ENCODE measurements at regions of chr11 and their contacts with region 1.

Region 1: DNA sequence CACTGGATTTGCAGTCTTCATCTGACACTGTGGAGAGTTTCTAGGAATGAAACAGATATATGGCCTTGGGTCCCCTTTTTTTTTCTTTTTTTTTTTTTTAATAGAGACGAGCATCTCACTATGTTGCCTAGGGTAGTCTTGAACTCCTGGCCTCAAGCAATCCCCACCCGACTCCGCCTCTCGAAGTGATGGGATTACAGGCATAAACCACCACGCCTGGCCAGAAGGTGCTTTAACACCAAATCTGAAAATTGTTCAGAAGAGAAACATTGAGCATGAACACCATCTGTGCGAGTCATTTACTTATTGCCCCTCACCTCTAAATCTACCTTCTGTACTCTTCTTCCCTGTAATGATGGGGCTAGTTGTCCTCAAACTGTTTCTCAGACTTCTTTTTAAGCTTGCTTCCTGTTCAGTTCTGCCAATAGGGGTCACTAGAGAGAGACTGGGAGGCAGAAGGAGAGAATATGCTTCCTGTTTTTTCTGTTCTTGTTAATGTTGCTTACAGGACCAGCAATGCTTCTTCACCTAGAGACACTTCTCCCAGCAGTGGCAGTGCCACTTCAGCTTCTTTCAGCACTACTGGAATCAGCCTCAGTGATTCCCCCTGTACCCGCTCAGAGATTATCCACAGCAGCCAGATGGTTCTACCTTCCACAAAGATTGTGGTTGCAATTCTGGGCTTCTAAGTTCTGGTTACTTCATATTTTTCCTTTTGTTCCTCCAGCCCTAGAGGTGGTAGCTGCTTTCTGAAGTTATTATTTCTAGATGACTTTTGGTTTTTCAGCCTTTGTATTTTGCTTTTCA is 20.8 kb upstream of the ZBED5 start:
- H3K4me3 ChIP-seq: no peak overlapping the region
- H3K27ac ChIP-seq: no peak overlapping the region
- H3K4me1 ChIP-seq: no peaks in the 10 kb centered on the region
- CTCF ChIP-seq: no peak

Region 2: DNA sequence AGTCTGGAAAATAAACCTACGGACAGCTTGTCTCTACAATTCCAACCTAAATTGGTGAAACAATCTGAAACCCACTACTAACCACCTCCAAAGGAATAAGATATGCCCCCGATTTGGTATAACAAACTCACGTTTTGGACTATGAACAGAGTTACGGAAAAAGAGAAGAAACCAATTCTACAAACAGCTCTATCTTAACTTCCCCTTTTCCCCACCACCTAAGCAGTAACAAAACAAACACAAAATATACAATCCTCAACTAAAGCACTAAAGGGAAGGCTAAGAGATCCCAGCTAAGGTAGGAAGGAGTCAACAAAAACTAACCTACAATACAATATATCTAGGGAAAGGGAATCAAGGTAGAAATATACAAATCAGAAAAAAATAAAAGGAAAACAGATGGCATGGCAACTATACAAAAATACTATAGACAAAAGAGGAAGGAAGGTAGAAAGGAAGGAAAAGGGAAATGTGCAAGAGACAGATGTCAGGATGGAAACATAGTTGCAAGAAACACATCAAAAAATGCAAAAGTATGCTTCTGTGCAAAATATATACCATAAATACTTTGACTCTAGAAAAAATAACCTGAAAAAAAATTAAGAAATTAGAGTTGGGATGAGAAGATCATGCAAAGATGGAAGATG is 266.3 kb before region 1 on chr11:
- CTCF ChIA-PET with region 1: no interaction called
- POLR2A ChIA-PET with region 1: no interaction called
- H3K4me3 ChIP-seq: no peak overlapping the region
- H3K27ac ChIP-seq: no peak overlapping the region
- H3K4me1 ChIP-seq: no peaks in the 10 kb centered on the region
- CTCF ChIP-seq: no peak

Region 3: GRCh38 chr11:10641177-10641911 is 237.3 kb before region 1 on chr11:
- CTCF ChIA-PET with region 1: no interaction called
- POLR2A ChIA-PET with region 1: no interaction called
- H3K4me3 ChIP-seq: no peak overlapping the region
- H3K27ac ChIP-seq: no peak overlapping the region
- H3K4me1 ChIP-seq: no peaks in the 10 kb centered on the region
- CTCF ChIP-seq: no peak

Region 4: GRCh38 chr11:10847960-10848870 is 30.4 kb before region 1 on chr11:
- CTCF ChIA-PET with region 1: interaction called, 12 read pairs
- POLR2A ChIA-PET with region 1: no interaction called
- H3K4me3 ChIP-seq: no peak overlapping the region
- H3K27ac ChIP-seq: no peak overlapping the region
- H3K4me1 ChIP-seq: no peaks in the 10 kb centered on the region
- CTCF ChIP-seq: no peak

Region 5: DNA sequence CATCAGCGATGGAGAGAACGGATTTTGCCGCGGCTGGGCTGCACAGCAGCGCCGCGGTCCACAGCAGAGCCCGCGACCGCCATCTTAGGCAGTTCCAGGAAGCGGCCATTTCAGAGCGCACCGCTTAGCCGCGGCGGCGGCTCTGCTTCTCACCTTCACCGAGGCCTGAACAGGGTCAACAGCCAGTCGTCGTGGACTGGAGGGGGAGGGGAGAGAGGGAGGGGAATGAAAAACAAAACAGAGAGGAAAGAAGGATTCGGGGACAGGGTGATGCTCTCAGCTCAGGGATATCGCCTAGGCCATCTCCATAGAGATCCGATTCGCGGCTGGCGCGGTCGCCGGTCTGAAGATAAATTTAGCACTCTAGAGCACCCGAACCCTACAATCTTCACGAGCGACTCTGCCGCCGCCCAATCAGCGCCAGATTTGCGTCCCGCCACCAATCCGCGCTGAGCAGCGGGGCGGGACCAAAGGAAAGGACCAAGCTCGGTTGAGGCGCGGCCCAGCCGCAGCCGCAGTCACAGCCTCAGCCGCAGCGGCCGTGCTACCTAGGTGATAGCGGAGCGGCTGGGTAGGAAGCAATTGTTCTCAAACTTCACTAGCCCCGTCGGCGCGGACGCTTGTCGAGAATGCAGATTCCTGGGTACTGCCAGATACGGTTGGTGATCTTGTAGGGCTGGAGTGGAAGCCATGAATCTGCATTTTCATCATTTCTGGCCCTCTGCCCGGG is 20.7 kb before region 1 on chr11 and contains the start of gene ZBED5:
- CTCF ChIA-PET with region 1: interaction called, 16 read pairs
- POLR2A ChIA-PET with region 1: interaction called, 5 read pairs
- H3K4me3 ChIP-seq: peak within 1 kb of the TSS; percentile 90
- H3K27ac ChIP-seq: peak within 1 kb of the TSS; percentile 77
- H3K4me1 ChIP-seq: no peaks in the 10 kb centered on the region
- CTCF ChIP-seq: peak; percentile 70

Region 6: GRCh38 chr11:10893714-10894151 is 15.1 kb after region 1 on chr11:
- CTCF ChIA-PET with region 1: interaction called, 21 read pairs
- POLR2A ChIA-PET with region 1: no interaction called
- H3K4me3 ChIP-seq: no peak overlapping the region
- H3K27ac ChIP-seq: no peak overlapping the region
- H3K4me1 ChIP-seq: no peaks in the 10 kb centered on the region
- CTCF ChIP-seq: no peak

Region 7: GRCh38 chr11:10899121-10899830 is 20.7 kb after region 1 on chr11:
- CTCF ChIA-PET with region 1: interaction called, 21 read pairs
- POLR2A ChIA-PET with region 1: no interaction called
- H3K4me3 ChIP-seq: no peak overlapping the region
- H3K27ac ChIP-seq: peak overlapping the region; percentile 78
- H3K4me1 ChIP-seq: 0 out of 2 replicates have a peak, but pooled peaks cover 5% of the 10 kb centered on the region
- CTCF ChIP-seq: no peak